HCT116 (cell line): ENCODE measurements at regions of chr11 and their contacts with region 1.

Region 1: GRCh38 chr11:82775736-82776346 is 42.2 kb upstream of the FAM181B start:
- DNase-seq: peak; percentile 36
- ATAC-seq: peak; percentile 100
- H3K4me3 ChIP-seq: peak overlapping the region in 1 of 2 experiments; percentile 2; a peak in 1 of 4 replicates
- H3K27ac ChIP-seq: no peak overlapping the region
- H3K4me1 ChIP-seq: no peaks in the 10 kb centered on the region
- H3K27me3 ChIP-seq: peaks cover 5% of the 10 kb centered on the region; the same call in 1 of the 2 replicates
- CTCF ChIP-seq: peak; percentile 71 to 95 (median 89); a peak in 5 of 6 replicates
- POLR2A ChIP-seq: no peak
- RAD21 ChIP-seq: peak; percentile 65

Region 2: DNA sequence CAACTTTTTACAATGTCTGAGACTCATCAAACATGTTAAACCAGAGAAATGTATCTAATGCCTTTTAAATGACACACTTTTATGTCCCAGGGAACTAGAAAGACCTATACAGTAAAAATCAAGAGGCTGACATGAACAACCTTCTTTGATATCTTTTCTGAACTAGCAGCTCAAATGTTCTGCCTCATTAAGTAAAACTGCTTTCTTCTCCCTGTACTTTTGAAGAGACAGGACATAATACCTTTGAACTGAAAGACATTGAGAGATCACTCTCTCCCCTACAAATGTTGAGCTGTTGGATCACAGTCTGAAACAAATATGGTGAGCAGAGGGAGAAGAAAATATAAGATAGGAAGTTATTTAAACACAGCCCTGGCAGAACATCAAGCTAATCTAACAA is 165.2 kb before region 1 on chr11:
- CTCF ChIA-PET with region 1: no interaction called
- POLR2A ChIA-PET with region 1: no interaction called
- RAD21 ChIA-PET with region 1: no interaction called
- intact Hi-C with region 1: no loop called
- DNase-seq: no peak
- ATAC-seq: no peak
- H3K4me3 ChIP-seq: no peak overlapping the region
- H3K27ac ChIP-seq: no peak overlapping the region
- H3K4me1 ChIP-seq: no peaks in the 10 kb centered on the region
- H3K27me3 ChIP-seq: no peaks in the 10 kb centered on the region
- CTCF ChIP-seq: no peak
- POLR2A ChIP-seq: no peak
- RAD21 ChIP-seq: no peak

Region 3: GRCh38 chr11:82790723-82791484 is 15.1 kb after region 1 on chr11:
- CTCF ChIA-PET with region 1: interaction called, 12 read pairs
- POLR2A ChIA-PET with region 1: no interaction called
- RAD21 ChIA-PET with region 1: no interaction called
- intact Hi-C with region 1: no loop called
- DNase-seq: no peak
- ATAC-seq: no peak
- H3K4me3 ChIP-seq: no peak overlapping the region
- H3K27ac ChIP-seq: no peak overlapping the region
- H3K4me1 ChIP-seq: no peaks in the 10 kb centered on the region
- H3K27me3 ChIP-seq: no peaks in the 10 kb centered on the region
- CTCF ChIP-seq: no peak
- POLR2A ChIP-seq: no peak
- RAD21 ChIP-seq: no peak

Region 4: GRCh38 chr11:82823647-82824619 is 48.1 kb after region 1 on chr11:
- CTCF ChIA-PET with region 1: no interaction called
- POLR2A ChIA-PET with region 1: no interaction called
- RAD21 ChIA-PET with region 1: no interaction called
- intact Hi-C with region 1: no loop called
- DNase-seq: no peak
- ATAC-seq: no peak
- H3K4me3 ChIP-seq: no peak overlapping the region
- H3K27ac ChIP-seq: no peak overlapping the region
- H3K4me1 ChIP-seq: no peaks in the 10 kb centered on the region
- H3K27me3 ChIP-seq: no peaks in the 10 kb centered on the region
- CTCF ChIP-seq: no peak
- POLR2A ChIP-seq: no peak
- RAD21 ChIP-seq: no peak